Activated CD8-positive, alpha-beta T cell treated with anti-CD3 and anti-CD28 coated beads, Interleukin-2, amount 10 ng/mL, durations not matched to agents 7 days and 5 days (primary cell): ENCODE measurements at regions of chr16 and their contacts with region 1.

Region 1: DNA sequence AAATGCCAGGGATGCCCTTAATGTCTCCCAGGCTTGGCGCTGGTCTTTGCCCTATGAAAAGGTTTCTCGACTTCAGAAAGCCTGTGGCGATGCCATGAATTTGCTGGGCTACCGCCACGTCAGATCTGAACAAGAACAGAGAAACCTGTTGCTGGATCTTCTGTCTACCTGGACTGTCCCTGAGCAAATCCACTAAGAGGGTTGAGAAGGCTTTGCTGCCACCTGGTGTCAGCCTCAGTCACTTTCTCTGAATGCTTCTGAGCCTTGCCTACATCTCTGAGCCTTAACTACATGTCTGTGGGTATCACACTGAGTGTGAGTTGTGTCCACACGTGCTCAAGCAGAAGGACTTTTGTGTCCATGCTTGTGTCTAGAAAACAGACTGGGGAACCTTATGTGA is 11.4 kb downstream of the CHST4 start:
- DNase-seq: peak; percentile 58
- ATAC-seq: peak; percentile 72
- H3K4me3 Mint-ChIP-seq: no peak overlapping the region
- H3K27ac Mint-ChIP-seq: no peak overlapping the region
- H3K4me1 Mint-ChIP-seq: no peaks in the 10 kb centered on the region
- H3K27me3 Mint-ChIP-seq: peaks cover 1% of the 10 kb centered on the region

Region 2: GRCh38 chr16:71552698-71553451 is 15.2 kb after region 1 on chr16:
- CTCF ChIA-PET with region 1: interaction called, 14 read pairs
- POLR2A ChIA-PET with region 1: no interaction called
- DNase-seq: no peak
- ATAC-seq: no peak
- H3K4me3 Mint-ChIP-seq: no peak overlapping the region
- H3K27ac Mint-ChIP-seq: no peak overlapping the region
- H3K4me1 Mint-ChIP-seq: no peaks in the 10 kb centered on the region
- H3K27me3 Mint-ChIP-seq: peaks cover 22% of the 10 kb centered on the region